Vagina (tissue), 2 donors: ENCODE measurements at regions of chr16 and their contacts with region 1.

Region 1: DNA sequence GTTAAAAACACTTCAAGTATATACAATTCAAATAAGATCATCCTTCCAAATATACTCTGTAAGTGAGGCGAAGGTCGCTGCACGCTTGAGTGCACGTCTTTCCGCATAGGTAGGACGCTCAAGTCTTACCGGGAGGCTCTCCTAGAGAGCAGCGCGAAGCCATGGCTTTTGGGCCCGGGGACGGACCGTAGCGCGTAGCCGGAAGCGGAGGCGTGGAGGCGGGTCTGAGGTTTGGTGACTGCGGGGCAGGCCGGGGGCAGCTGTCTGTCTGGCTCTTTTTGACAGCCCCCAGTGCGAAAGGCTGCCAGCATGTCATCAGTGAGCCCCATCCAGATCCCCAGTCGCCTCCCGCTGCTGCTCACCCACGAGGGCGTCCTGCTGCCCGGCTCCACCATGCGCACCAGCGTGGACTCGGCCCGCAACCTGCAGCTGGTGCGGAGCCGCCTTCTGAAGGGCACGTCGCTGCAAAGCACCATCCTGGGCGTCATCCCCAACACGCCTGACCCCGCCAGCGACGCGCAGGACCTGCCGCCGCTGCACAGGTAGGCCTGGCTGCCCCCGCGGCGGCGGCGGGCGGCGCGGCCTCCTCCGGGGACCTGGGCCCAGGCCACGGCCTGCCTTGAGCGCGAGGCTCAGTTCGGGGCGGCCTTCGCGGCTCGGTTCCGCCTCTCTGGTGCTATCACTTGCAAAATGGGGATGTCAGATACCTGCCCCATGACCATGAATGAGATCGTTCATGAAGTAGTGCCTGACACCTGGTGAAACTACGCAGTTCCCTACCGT is at the start of gene LONP2:
- DNase-seq: no peak
- H3K4me3 ChIP-seq: peak within 1 kb of the TSS; percentile 71 to 73
- H3K27ac ChIP-seq: peak within 1 kb of the TSS; percentile 64
- H3K4me1 ChIP-seq: peaks cover 35% of the 10 kb centered on the region
- H3K27me3 ChIP-seq: no peaks in the 10 kb centered on the region
- CTCF ChIP-seq: no peak
- POLR2A ChIP-seq: no peak
- total RNA-seq, gene LONP2: 40.3 TPM

Region 2: DNA sequence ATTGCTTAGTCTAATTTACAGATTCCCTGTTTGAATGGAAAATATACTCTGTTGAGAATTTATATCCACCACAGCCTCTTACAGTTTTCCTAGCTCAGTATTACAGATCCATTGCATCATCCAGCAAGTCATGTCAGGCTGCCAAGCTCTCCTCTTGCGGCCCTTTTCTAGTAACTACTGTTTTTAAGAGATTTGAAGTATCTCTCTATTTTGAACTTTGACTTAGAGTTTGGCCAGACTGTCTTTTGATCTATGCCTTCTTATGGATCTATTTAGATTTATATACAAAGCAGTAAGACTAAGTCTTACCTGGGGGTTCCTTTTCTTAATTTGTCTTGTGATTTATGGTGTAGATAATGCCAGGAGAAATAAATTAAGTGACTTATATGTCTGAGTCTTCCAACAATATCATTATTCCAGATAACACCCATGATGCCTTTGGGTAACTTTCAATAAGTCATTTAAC is 56.2 kb after region 1 on chr16:
- intact Hi-C with region 1: no loop called
- DNase-seq: no peak
- H3K4me3 ChIP-seq: no peak overlapping the region
- H3K27ac ChIP-seq: no peak overlapping the region
- H3K4me1 ChIP-seq: no peaks in the 10 kb centered on the region
- H3K27me3 ChIP-seq: no peaks in the 10 kb centered on the region
- CTCF ChIP-seq: no peak
- POLR2A ChIP-seq: no peak

Region 3: GRCh38 chr16:48609652-48610029 is 365.4 kb after region 1 on chr16:
- intact Hi-C with region 1: loop called (anchors 10 kb)
- DNase-seq: peak in 1 of 2 donors; percentile 85
- H3K4me3 ChIP-seq: peak overlapping the region; percentile 96 to 100
- H3K27ac ChIP-seq: peak overlapping the region; percentile 86
- H3K4me1 ChIP-seq: peaks cover 73% of the 10 kb centered on the region
- H3K27me3 ChIP-seq: no peaks in the 10 kb centered on the region
- CTCF ChIP-seq: no peak
- POLR2A ChIP-seq: no peak